Common myeloid progenitor, CD34-positive (primary cell): ENCODE measurements at regions of chr17 and their contacts with region 1.

Region 1: DNA sequence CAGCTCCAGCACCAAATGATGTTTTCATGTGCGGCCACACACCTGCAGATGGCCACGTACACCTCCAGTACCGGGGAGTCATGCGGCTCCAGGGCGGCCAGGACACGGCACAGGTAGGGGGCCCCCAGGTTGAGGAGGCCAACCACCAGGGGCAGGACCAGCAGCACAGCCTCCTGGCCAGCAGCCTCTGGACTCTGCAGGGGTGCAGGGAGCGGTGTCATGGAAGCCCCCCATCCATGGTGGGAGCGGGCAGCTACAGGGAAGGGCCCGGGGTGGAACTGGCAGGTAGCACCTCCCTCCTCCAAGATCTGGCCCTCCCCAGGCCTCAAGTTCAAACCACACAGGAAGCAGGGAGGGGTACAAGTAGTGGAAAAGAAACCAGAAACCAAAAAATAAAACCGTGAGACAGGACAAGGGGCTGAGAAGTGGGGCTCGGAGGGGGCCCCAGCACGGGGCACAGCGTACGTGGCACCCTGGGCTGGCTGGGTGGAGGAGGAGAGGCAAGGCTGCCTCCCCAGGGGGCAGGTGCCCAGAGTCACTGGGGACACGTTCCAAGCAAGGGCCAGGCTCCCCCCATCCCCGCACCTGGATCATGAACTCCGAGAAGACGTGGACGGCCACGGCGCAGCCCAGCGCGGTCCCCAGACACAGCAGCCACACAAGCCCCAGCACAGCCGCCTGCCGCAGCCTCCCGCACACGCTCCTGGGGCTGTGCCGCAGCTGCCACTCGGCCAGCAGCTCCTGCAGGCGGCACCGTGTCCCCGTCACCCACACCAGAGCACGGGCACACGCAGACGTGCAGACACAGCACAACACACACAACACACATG is 7.4 kb downstream of the TMC6 start:
- DNase-seq: peak in 2 of 3 donors; percentile 47 to 49
- H3K4me3 ChIP-seq: peak overlapping the region in 4 of 7 experiments; percentile 28 to 59 (median 46)
- H3K27ac ChIP-seq: no peak overlapping the region
- H3K4me1 ChIP-seq: peaks cover 0 to 67% (median 59%) of the 10 kb centered on the region in 4 experiments
- H3K27me3 ChIP-seq: no peaks in the 10 kb centered on the region

Region 2: GRCh38 chr17:77881545-77881944 is 239.6 kb before region 1 on chr17:
- CTCF ChIA-PET with region 1: no interaction called
- POLR2A ChIA-PET with region 1: no interaction called
- DNase-seq: peak; percentile 88 to 98 (median 98)
- H3K4me3 ChIP-seq: peak overlapping the region in 5 of 7 experiments; percentile 8 to 56 (median 37)
- H3K27ac ChIP-seq: peak overlapping the region in 1 of 2 experiments; percentile 62
- H3K4me1 ChIP-seq: peaks cover 10 to 39% (median 38%) of the 10 kb centered on the region in 4 experiments
- H3K27me3 ChIP-seq: peaks cover 0 to 6% (median 5%) of the 10 kb centered on the region in 5 experiments

Region 3: GRCh38 chr17:78133971-78134898 is 13.0 kb after region 1 on chr17:
- CTCF ChIA-PET with region 1: interaction called, 122 read pairs
- POLR2A ChIA-PET with region 1: interaction called, 11 read pairs
- DNase-seq: peak; percentile 82 to 91 (median 91)
- H3K4me3 ChIP-seq: peak overlapping the region in 4 of 7 experiments; percentile 6 to 58 (median 37)
- H3K27ac ChIP-seq: no peak overlapping the region
- H3K4me1 ChIP-seq: peaks cover 3 to 86% (median 80%) of the 10 kb centered on the region in 4 experiments
- H3K27me3 ChIP-seq: no peaks in the 10 kb centered on the region